ENCODE measurements at regions of chr5 and their contacts with region 1.

Region 1: DNA sequence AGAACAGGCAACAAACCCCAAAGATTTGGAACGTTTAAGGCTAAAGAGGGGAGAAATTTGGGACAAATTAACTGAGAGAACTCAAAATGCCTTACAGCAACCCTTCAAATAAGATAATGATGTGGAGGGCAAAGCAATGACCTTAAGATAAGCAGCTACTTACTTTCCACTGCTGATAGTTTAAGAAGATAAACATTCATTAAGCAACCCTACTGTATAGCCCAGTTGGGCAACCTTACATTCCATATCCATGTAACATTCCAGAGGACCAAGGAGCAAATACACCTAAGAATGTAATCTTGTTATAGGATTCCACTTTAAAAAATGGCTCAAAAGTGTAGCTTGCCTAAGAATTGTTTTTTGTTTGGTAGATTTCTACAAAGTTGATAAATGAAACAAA is 14.8 kb downstream of the ETF1 start:
- DNase-seq: no peak
- H3K4me3 ChIP-seq: no peak overlapping the region
- H3K27ac ChIP-seq: no peak overlapping the region
- H3K4me1 ChIP-seq: peaks cover 0 to 10% (median 1%) of the 10 kb centered on the region in 4 experiments; a peak in 3 of 7 replicates
- H3K27me3 ChIP-seq: no peaks in the 10 kb centered on the region
- CTCF ChIP-seq: no peak
- EP300 ChIP-seq: no peak
- POLR2A ChIP-seq: no peak
- RAD21 ChIP-seq: no peak

Region 2: GRCh38 chr5:138515556-138516245 is 12.5 kb before region 1 on chr5:
- CTCF ChIA-PET with region 1: interaction called, 8 read pairs
- POLR2A ChIA-PET with region 1: interaction called, 25 read pairs
- DNase-seq: no peak
- H3K4me3 ChIP-seq: no peak overlapping the region
- H3K27ac ChIP-seq: no peak overlapping the region
- H3K4me1 ChIP-seq: no peaks in the 10 kb centered on the region
- H3K27me3 ChIP-seq: no peaks in the 10 kb centered on the region
- CTCF ChIP-seq: no peak
- EP300 ChIP-seq: no peak
- POLR2A ChIP-seq: no peak
- RAD21 ChIP-seq: no peak

Region 3: GRCh38 chr5:138542956-138543729 is 14.9 kb after region 1 on chr5 and contains the start of gene ETF1:
- CTCF ChIA-PET with region 1: interaction called, 8 read pairs
- POLR2A ChIA-PET with region 1: interaction called, 106 read pairs
- DNase-seq: peak; percentile 98
- H3K4me3 ChIP-seq: peak within 1 kb of the TSS; percentile 89 to 100 (median 95)
- H3K27ac ChIP-seq: peak within 1 kb of the TSS; percentile 100
- H3K4me1 ChIP-seq: peaks cover 0 to 16% (median 2%) of the 10 kb centered on the region in 4 experiments; a peak in 4 of 7 replicates
- H3K27me3 ChIP-seq: no peaks in the 10 kb centered on the region
- CTCF ChIP-seq: no peak
- EP300 ChIP-seq: peak in 1 of 2 experiments; percentile 72; a peak in 2 of 3 replicates
- POLR2A ChIP-seq: peak; percentile 77 to 82
- RAD21 ChIP-seq: no peak
- total RNA-seq, gene ETF1: 168 TPM in 2 replicates

Region 4: DNA sequence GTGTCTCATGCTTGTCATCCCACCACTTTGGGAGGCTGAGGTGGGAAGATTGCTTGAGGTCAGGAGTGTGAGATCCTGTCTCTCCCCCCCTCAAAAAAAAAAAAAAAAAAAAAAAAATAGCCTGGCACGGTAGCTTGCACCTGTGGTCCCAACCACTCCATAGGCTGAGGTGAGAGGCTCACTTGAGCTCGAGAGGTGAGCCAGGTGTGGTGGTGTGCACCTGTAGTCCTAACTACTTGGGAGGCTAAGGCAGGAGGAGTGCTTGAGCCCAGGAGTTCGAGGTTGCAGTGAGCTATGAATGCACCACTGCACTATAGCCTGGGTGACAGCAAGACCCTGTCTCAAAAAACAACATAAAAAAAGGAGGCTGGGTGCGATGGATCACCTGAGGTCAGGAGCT is 24.5 kb after region 1 on chr5:
- CTCF ChIA-PET with region 1: interaction called, 8 read pairs
- POLR2A ChIA-PET with region 1: interaction called, 12 read pairs
- DNase-seq: no peak
- H3K4me3 ChIP-seq: no peak overlapping the region
- H3K27ac ChIP-seq: no peak overlapping the region
- H3K4me1 ChIP-seq: no peaks in the 10 kb centered on the region
- H3K27me3 ChIP-seq: no peaks in the 10 kb centered on the region
- CTCF ChIP-seq: no peak
- EP300 ChIP-seq: no peak
- POLR2A ChIP-seq: no peak
- RAD21 ChIP-seq: no peak

Region 5: DNA sequence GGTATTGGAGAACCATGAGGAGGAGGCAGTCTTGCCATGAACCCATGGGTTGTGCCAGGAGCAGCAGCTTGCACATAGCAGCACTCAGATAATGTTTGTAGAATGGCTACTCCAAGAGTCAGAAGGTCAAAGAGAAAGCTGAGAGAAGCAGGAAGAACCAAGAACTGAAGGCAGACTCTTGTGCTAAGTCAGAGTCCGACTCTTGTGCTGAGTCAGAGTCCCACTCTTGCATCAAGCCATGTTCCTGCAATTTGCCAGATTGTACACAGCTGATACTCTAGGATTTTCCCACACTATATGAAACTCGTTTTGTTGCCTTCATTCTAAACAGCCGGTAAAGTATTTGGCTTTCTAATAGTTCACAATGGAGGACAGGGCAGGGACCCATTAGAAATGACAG is 73.2 kb after region 1 on chr5:
- CTCF ChIA-PET with region 1: no interaction called
- POLR2A ChIA-PET with region 1: no interaction called
- DNase-seq: no peak
- H3K4me3 ChIP-seq: no peak overlapping the region
- H3K27ac ChIP-seq: no peak overlapping the region
- H3K4me1 ChIP-seq: no peaks in the 10 kb centered on the region; a peak in 1 of 7 replicates
- H3K27me3 ChIP-seq: no peaks in the 10 kb centered on the region
- CTCF ChIP-seq: no peak
- EP300 ChIP-seq: no peak
- POLR2A ChIP-seq: no peak
- RAD21 ChIP-seq: no peak